ENCODE measurements at regions of chr4 and their contacts with region 1.

Region 1: DNA sequence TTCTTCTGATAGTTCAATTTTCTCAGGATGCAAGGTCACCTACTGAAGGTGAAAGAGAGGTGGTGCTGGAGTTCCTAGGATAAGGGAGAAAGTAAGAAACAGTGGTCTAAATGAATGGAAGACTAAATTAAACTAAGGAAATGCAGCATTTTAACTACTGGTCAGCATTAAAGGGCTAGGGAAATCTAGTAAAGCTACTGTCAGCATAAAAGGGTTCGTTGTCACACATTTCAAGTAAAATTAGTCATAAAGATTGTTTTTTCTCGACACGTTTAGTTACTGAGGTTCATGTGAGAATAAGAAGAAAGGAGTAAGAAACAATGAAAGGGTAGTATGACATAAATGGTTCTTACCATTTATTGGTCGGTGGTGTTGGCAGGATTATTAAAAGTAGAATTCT is 40.0 kb upstream of the COX18 start:
- DNase-seq: no peak
- H3K4me3 ChIP-seq: no peak overlapping the region
- H3K27ac ChIP-seq: no peak overlapping the region
- H3K4me1 ChIP-seq: peaks cover 0 to 6% (median 0%) of the 10 kb centered on the region in 4 experiments; a peak in 1 of 7 replicates
- H3K27me3 ChIP-seq: no peaks in the 10 kb centered on the region
- CTCF ChIP-seq: no peak
- EP300 ChIP-seq: no peak
- POLR2A ChIP-seq: no peak
- RAD21 ChIP-seq: no peak

Region 2: DNA sequence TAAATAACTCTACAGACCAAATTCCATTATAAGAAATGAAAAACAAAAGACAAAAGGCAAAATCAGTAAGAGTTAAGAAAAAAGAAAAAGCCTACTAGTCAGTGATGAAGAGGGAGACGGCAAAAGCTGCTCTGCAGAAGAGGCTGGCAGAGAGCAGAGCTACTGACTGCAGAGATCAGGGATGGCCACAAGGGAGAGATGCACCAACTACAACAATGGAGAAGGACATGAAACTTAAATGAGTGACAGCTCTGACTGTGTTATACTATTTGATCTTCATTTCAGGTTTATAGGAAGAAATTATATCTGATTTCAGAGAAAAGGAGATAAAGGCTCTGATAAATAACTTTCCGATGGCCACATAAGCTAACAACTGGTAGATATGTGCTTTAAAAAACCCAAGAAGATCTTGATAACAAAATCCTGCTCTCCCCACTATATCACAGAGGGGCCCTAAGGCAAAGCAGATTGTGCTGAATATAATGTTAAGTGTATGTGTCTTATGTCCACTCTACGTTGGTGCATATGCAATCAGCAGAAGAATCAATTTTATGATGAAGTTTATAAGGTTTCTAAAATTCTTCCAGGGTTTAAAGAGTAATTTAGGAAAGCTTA is 18.5 kb after region 1 on chr4:
- CTCF ChIA-PET with region 1: interaction called, 12 read pairs
- POLR2A ChIA-PET with region 1: no interaction called
- DNase-seq: no peak
- H3K4me3 ChIP-seq: no peak overlapping the region
- H3K27ac ChIP-seq: no peak overlapping the region
- H3K4me1 ChIP-seq: no peaks in the 10 kb centered on the region
- H3K27me3 ChIP-seq: no peaks in the 10 kb centered on the region
- CTCF ChIP-seq: peak; percentile 3 to 51 (median 40); a peak in 3 of 4 replicates
- EP300 ChIP-seq: no peak
- POLR2A ChIP-seq: no peak
- RAD21 ChIP-seq: peak in 1 of 2 experiments; percentile 20; a peak in 1 of 4 replicates

Region 3: GRCh38 chr4:73245955-73246354 is 136.5 kb after region 1 on chr4:
- CTCF ChIA-PET with region 1: no interaction called
- POLR2A ChIA-PET with region 1: no interaction called
- DNase-seq: no peak
- H3K4me3 ChIP-seq: no peak overlapping the region
- H3K27ac ChIP-seq: no peak overlapping the region
- H3K4me1 ChIP-seq: peaks cover 0 to 3% (median 0%) of the 10 kb centered on the region in 4 experiments; a peak in 2 of 7 replicates
- H3K27me3 ChIP-seq: no peaks in the 10 kb centered on the region
- CTCF ChIP-seq: no peak
- EP300 ChIP-seq: no peak
- POLR2A ChIP-seq: no peak
- RAD21 ChIP-seq: no peak

Measured in H1 (cell line).